Activated naive CD8-positive, alpha-beta T cell treated with anti-CD3 and anti-CD28 coated beads, Interleukin-2, amount 10 ng/mL, durations not matched to agents 7 days and 5 days (primary cell): ENCODE measurements at regions of chr5 and their contacts with region 1.

Region 1: DNA sequence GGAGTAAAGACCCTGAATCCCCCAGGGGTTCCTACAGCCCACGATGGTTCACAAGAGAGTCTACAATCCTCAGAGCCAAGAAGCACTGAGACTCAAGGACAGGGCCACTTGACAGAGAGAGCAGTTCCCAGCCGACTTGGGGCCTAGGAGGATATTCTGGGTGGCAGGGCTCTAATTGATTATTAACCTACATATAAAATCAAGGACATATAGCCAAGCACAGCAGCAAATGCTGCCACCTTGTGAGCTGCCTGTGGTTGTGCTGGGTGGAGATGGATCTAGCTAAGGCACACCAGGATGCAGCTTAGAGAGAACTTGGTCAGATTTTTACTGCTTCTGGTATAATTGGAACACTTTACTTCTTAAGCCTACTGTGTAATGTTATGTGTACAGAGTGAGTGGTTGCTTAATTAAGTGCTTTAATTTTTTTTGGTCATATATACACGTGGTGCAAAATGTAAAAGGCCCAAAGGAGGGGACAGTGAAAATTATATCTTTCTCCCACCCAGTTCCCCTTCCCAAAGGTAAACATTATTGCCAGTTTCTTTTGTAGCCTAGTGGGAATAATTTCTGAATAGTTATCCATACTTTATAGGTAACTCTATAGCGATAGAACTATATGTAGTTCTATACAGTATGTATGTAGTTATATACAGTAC is 78.8 kb downstream of the F2RL2 start:
- DNase-seq: peak; percentile 48
- ATAC-seq: peak; percentile 41
- H3K4me3 Mint-ChIP-seq: peak overlapping the region; percentile 83
- H3K27ac Mint-ChIP-seq: peak overlapping the region; percentile 93
- H3K4me1 Mint-ChIP-seq: peaks cover 65% of the 10 kb centered on the region
- H3K27me3 Mint-ChIP-seq: no peaks in the 10 kb centered on the region

Region 2: GRCh38 chr5:76473661-76474060 is 70.7 kb before region 1 on chr5:
- POLR2A ChIA-PET with region 1: interaction called, 12 read pairs
- DNase-seq: peak; percentile 37
- ATAC-seq: peak; percentile 98
- H3K4me3 Mint-ChIP-seq: peak overlapping the region; percentile 67
- H3K27ac Mint-ChIP-seq: peak overlapping the region; percentile 91
- H3K4me1 Mint-ChIP-seq: peaks cover 34% of the 10 kb centered on the region
- H3K27me3 Mint-ChIP-seq: no peaks in the 10 kb centered on the region